ENCODE measurements at regions of chr13 and their contacts with region 1.

Region 1: DNA sequence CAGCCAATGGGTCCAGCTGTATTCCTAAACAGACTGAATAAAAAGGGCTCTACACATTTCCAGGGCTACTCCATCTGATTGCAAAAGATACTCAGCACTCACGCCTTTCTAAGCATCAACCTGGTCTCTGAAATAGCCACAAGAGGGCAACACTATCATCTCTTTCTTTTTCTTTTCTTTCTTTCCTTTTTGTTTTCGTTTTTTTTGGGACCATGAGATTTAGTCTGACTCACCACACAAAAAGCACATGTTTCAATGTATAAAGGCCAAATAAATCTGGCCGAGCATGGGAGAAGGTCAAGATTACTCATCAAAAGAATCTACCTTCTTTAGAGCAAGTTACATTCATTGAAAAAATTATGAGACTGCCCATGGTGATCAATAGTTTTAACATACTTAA is 805.6 kb upstream of the ARGLU1 start:
- DNase-seq: peak; percentile 92
- H3K4me3 ChIP-seq: no peak overlapping the region
- H3K27ac ChIP-seq: no peak overlapping the region
- H3K4me1 ChIP-seq: peaks cover 49% of the 10 kb centered on the region
- H3K27me3 ChIP-seq: no peaks in the 10 kb centered on the region

Region 2: GRCh38 chr13:107867701-107868661 is 494.4 kb after region 1 on chr13:
- in situ Hi-C with region 1: loop called (anchors 5 kb)
- DNase-seq: peak; percentile 84
- H3K4me3 ChIP-seq: peak overlapping the region; percentile 98
- H3K27ac ChIP-seq: peak overlapping the region; percentile 74
- H3K4me1 ChIP-seq: peaks cover 19% of the 10 kb centered on the region
- H3K27me3 ChIP-seq: no peaks in the 10 kb centered on the region

Measured in GM23248 (cell line).